Ovary (tissue), 10 donors: ENCODE measurements at regions of chr3 and their contacts with region 1.

Region 1: DNA sequence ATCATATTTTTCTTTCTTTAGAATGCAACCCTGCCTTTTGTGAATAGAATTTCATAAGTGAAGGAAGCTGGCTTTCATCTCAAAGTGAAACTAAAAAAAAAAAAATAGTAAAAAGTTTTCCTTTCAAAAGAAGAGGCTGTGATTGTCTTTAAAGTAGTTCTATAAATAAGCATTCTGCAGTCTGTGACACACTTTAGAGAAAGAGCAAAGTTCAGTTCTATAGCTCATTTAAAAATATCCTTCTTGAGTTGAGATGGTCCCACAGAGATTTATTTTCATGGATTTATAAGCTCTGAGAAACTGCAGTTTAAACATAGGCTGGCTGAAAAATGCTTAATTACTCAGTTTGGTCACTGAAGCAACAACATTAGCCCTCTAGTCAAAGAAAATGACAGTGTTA is 36.1 kb upstream of the CNTN6 start:
- DNase-seq: no peak
- H3K4me3 ChIP-seq: no peak overlapping the region
- H3K27ac ChIP-seq: no peak overlapping the region
- H3K4me1 ChIP-seq: no peaks in the 10 kb centered on the region
- H3K27me3 ChIP-seq: no peaks in the 10 kb centered on the region
- CTCF ChIP-seq: no peak
- EP300 ChIP-seq: no peak
- POLR2A ChIP-seq: no peak

Region 2: DNA sequence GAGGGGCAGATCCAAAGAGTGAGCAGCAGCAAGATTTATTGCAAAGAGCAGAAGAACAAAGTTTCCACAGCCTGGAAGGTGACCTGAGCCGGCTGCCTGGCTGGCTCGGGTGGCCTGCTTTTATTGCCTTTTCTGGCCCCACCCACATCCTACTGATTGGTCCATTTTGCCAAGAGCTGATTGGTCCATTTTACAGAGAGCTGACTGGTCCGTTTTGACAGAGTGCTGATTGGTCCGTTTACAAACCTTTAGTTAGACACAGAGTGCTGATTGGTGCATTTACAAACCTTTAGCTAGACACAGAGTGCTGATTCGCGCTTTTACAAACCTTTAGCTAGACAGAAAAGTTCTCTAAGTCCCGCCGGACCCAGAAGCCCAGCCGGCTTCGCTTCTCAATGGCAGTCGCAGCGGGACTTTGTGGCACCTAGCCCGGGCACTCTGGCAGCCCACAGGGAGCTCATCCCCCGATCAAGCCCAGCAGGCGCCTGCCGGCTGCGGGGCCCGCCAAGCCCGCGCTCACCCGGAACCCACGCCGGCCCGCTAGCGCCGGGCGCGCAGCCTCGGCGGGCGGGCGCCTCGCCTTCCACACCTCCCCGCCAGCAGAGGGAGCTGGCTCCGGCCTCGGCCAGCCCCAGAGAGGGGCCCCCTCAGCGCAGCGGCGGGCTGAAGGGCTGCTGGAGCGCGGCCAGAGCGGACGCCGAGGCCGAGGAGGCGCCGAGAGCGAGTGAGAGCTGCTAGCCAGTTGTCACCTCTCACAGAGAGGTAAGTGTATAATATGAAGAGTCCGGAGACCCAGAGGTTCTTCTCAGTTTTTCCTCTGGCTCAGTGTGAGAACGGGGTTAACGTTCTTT is 521.0 kb before region 1 on chr3:
- intact Hi-C with region 1: loop called in 1 of 4 experiments (anchors 5 kb)
- DNase-seq: peak in 3 of 5 donors; percentile 9 to 34 (median 18)
- H3K4me3 ChIP-seq: peak overlapping the region; percentile 18
- H3K27ac ChIP-seq: no peak overlapping the region
- H3K4me1 ChIP-seq: no peaks in the 10 kb centered on the region
- H3K27me3 ChIP-seq: no peaks in the 10 kb centered on the region
- CTCF ChIP-seq: no peak
- EP300 ChIP-seq: no peak
- POLR2A ChIP-seq: no peak